Activated CD8-positive, alpha-beta T cell treated with anti-CD3 and anti-CD28 coated beads, Interleukin-2, amount 10 ng/mL, durations not matched to agents 7 days and 5 days (primary cell): ENCODE measurements at regions of chr10 and their contacts with region 1.

Region 1: GRCh38 chr10:16545116-16545736 is 23.5 kb upstream of the C1QL3 start:
- DNase-seq: peak; percentile 24
- ATAC-seq: no peak
- H3K4me3 Mint-ChIP-seq: no peak overlapping the region
- H3K27ac Mint-ChIP-seq: no peak overlapping the region
- H3K4me1 Mint-ChIP-seq: no peaks in the 10 kb centered on the region
- H3K27me3 Mint-ChIP-seq: peaks cover 7% of the 10 kb centered on the region

Region 2: GRCh38 chr10:15901889-15902288 is 643.3 kb before region 1 on chr10:
- CTCF ChIA-PET with region 1: interaction called, 12 read pairs
- POLR2A ChIA-PET with region 1: no interaction called
- DNase-seq: no peak
- ATAC-seq: no peak
- H3K4me3 Mint-ChIP-seq: no peak overlapping the region
- H3K27ac Mint-ChIP-seq: no peak overlapping the region
- H3K4me1 Mint-ChIP-seq: no peaks in the 10 kb centered on the region
- H3K27me3 Mint-ChIP-seq: peaks cover 11% of the 10 kb centered on the region